ENCODE measurements at regions of chr3 and their contacts with region 1.

Region 1: DNA sequence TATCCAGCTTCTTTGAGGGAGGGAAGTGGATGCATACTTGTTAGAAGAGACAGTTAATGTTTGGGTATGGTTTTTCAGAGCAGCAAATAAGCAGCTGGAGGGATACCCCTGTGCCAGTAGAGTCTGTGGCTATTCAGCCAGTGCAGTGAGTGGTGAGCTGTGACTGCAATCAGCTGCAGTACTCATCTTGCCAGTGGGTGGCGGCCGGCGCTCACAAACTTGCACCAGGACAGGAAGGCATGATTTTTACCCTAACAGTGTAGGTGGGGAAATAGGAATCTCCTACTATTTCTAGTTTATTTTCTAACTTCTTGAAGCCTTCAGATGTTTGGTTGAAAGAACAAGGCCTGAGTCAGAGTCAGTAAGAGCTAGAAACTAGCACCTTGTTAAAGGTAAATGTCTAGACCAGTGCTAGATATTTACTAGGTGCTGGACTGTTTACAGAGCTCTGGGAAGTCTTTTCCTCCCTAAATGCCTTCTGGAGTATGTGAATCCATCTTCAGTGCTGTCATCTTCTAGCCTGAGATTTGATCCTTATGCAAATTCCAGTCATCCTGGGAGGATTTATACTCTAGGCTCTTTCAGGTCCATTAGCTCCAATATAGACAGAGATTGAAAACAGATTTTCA is 23.6 kb downstream of the TIMP4 start:
- DNase-seq: peak; percentile 82
- H3K4me3 ChIP-seq: no peak overlapping the region
- H3K27ac ChIP-seq: no peak overlapping the region
- H3K4me1 ChIP-seq: no peaks in the 10 kb centered on the region
- H3K27me3 ChIP-seq: peaks cover 29% of the 10 kb centered on the region

Region 2: DNA sequence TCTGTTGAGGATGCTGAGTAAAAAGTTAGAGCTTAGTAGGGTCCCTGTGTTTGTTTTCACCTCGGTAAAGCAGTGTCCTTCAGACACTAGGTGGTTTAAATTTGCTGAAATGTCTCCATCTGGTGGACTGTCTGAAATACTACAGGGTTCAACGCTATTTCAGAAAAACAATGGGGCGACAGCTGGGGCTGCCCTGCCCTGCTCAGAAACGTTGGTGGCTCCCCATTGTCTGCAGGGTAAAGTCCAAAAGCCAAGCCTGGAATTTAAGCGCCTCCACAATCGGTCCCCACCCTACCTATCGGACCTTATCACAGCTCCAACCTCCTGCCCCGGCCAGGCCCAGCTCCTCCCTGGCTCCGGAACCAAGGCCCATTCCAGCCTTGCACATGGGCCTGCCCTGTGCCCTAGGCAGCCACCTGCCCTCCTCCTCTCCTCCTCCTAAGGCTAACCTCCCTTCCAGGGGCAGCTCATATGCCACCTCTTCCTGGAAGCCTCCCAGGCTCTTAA is 344.8 kb after region 1 on chr3:
- in situ Hi-C with region 1: loop called (anchors 5 kb)
- DNase-seq: peak; percentile 58
- H3K4me3 ChIP-seq: no peak overlapping the region
- H3K27ac ChIP-seq: no peak overlapping the region
- H3K4me1 ChIP-seq: peaks cover 10% of the 10 kb centered on the region
- H3K27me3 ChIP-seq: no peaks in the 10 kb centered on the region